ENCODE measurements at regions of chr2 and their contacts with region 1.

Region 1: GRCh38 chr2:84905181-84906107 is at the start of gene TMSB10:
- DNase-seq: peak; percentile 87
- H3K4me3 Mint-ChIP-seq: peak within 1 kb of the TSS; percentile 85
- H3K27ac Mint-ChIP-seq: peak within 1 kb of the TSS; percentile 83
- H3K4me1 Mint-ChIP-seq: peaks cover 29% of the 10 kb centered on the region
- H3K27me3 Mint-ChIP-seq: no peaks in the 10 kb centered on the region
- CTCF ChIP-seq: peak; percentile 10
- total RNA-seq, gene TMSB10: 3,313 and 3,349 TPM in 2 replicates

Region 2: DNA sequence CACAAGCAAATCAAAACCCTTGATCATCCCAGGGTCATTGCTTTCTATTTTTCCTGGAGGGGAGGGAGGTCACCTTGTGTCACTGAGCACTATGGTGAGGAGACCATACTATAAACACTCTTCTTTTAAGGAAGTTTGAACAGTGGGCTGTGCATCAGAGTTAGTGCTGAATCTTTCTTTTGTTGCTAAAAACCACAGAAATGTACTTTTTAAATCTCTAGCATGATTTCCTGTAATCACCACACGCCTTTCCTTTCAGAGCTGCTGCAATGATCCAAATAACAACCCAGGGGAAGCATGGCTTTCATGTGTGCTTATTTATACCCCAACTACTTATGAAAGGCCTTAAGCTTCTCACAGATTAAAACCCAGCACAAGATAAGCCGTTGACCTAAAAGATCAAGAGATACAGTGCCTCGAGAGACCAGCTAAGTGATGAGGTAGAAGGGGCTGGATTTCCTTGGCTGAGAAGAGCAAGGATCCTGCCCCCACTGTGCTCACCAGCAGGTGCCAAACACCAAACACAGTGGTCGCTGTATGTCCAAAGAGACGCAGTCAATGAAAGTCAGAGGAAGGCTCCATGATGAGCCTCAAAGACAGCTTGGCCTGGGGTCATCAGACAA is 59.3 kb before region 1 on chr2:
- CTCF ChIA-PET with region 1: no interaction called
- POLR2A ChIA-PET with region 1: no interaction called
- intact Hi-C with region 1: no loop called
- DNase-seq: no peak
- H3K4me3 Mint-ChIP-seq: no peak overlapping the region
- H3K27ac Mint-ChIP-seq: peak overlapping the region; percentile 50
- H3K4me1 Mint-ChIP-seq: peaks cover 16% of the 10 kb centered on the region
- H3K27me3 Mint-ChIP-seq: no peaks in the 10 kb centered on the region
- CTCF ChIP-seq: no peak

Region 3: DNA sequence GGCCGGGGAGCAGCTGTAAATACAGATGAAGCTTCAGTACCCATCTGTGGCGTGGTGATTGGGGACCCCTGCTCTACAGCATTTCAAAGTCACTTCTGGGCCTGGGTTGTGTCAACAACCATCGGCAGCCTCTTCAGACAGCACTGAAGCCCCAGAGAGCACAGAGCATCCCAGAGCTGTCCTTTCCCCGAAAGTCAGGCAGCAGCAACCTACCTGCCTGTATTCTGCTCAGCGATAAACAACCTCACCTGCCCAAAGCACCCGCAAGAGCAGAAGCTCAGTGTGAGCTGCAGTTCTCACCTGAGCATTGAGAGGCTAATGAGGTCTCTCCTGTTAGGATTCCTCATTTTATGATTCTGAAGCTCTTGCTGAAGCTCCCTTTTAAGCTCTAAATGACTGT is 43.9 kb before region 1 on chr2:
- CTCF ChIA-PET with region 1: no interaction called
- POLR2A ChIA-PET with region 1: no interaction called
- intact Hi-C with region 1: no loop called
- DNase-seq: no peak
- H3K4me3 Mint-ChIP-seq: no peak overlapping the region
- H3K27ac Mint-ChIP-seq: no peak overlapping the region
- H3K4me1 Mint-ChIP-seq: peaks cover 11% of the 10 kb centered on the region
- H3K27me3 Mint-ChIP-seq: no peaks in the 10 kb centered on the region
- CTCF ChIP-seq: no peak

Region 4: GRCh38 chr2:84888401-84889276 is 16.8 kb before region 1 on chr2:
- CTCF ChIA-PET with region 1: interaction called, 3 read pairs
- POLR2A ChIA-PET with region 1: interaction called, 65 read pairs
- intact Hi-C with region 1: no loop called
- DNase-seq: peak; percentile 59
- H3K4me3 Mint-ChIP-seq: peak overlapping the region; percentile 51
- H3K27ac Mint-ChIP-seq: peak overlapping the region; percentile 83
- H3K4me1 Mint-ChIP-seq: peaks cover 6% of the 10 kb centered on the region
- H3K27me3 Mint-ChIP-seq: no peaks in the 10 kb centered on the region
- CTCF ChIP-seq: no peak

Region 5: GRCh38 chr2:84919885-84920580 is 14.6 kb after region 1 on chr2:
- CTCF ChIA-PET with region 1: interaction called, 39 read pairs
- POLR2A ChIA-PET with region 1: interaction called, 189 read pairs
- intact Hi-C with region 1: loop called (anchors 1 kb)
- DNase-seq: peak; percentile 96
- H3K4me3 Mint-ChIP-seq: peak overlapping the region; percentile 61
- H3K27ac Mint-ChIP-seq: peak overlapping the region; percentile 100
- H3K4me1 Mint-ChIP-seq: peaks cover 24% of the 10 kb centered on the region
- H3K27me3 Mint-ChIP-seq: no peaks in the 10 kb centered on the region
- CTCF ChIP-seq: no peak

Region 6: GRCh38 chr2:84958135-84959044 is 52.9 kb after region 1 on chr2:
- CTCF ChIA-PET with region 1: no interaction called
- POLR2A ChIA-PET with region 1: interaction called, 62 read pairs
- intact Hi-C with region 1: no loop called
- DNase-seq: peak; percentile 97
- H3K4me3 Mint-ChIP-seq: peak overlapping the region; percentile 54
- H3K27ac Mint-ChIP-seq: peak overlapping the region; percentile 98
- H3K4me1 Mint-ChIP-seq: peaks cover 37% of the 10 kb centered on the region
- H3K27me3 Mint-ChIP-seq: no peaks in the 10 kb centered on the region
- CTCF ChIP-seq: no peak

Region 7: GRCh38 chr2:85017411-85018048 is 112.1 kb after region 1 on chr2:
- CTCF ChIA-PET with region 1: interaction called, 3 read pairs
- POLR2A ChIA-PET with region 1: interaction called, 11 read pairs
- intact Hi-C with region 1: no loop called
- DNase-seq: no peak
- H3K4me3 Mint-ChIP-seq: no peak overlapping the region
- H3K27ac Mint-ChIP-seq: no peak overlapping the region
- H3K4me1 Mint-ChIP-seq: peaks cover 22% of the 10 kb centered on the region
- H3K27me3 Mint-ChIP-seq: no peaks in the 10 kb centered on the region
- CTCF ChIP-seq: peak; percentile 26

Region 8: GRCh38 chr2:85148182-85148581 is 242.7 kb after region 1 on chr2:
- CTCF ChIA-PET with region 1: no interaction called
- POLR2A ChIA-PET with region 1: no interaction called
- intact Hi-C with region 1: no loop called
- DNase-seq: no peak
- H3K4me3 Mint-ChIP-seq: no peak overlapping the region
- H3K27ac Mint-ChIP-seq: no peak overlapping the region
- H3K4me1 Mint-ChIP-seq: no peaks in the 10 kb centered on the region
- H3K27me3 Mint-ChIP-seq: no peaks in the 10 kb centered on the region
- CTCF ChIP-seq: no peak

Measured in MCF 10A (cell line).